Mammary epithelial cell (primary cell): ENCODE measurements at regions of chr10 and their contacts with region 1.

Region 1: GRCh38 chr10:82089333-82089732 is 214.3 kb downstream of the NRG3 start:
- DNase-seq: no peak
- H3K4me3 ChIP-seq: no peak overlapping the region
- H3K27ac ChIP-seq: no peak overlapping the region
- H3K4me1 ChIP-seq: no peaks in the 10 kb centered on the region
- H3K27me3 ChIP-seq: no peaks in the 10 kb centered on the region
- CTCF ChIP-seq: no peak

Region 2: DNA sequence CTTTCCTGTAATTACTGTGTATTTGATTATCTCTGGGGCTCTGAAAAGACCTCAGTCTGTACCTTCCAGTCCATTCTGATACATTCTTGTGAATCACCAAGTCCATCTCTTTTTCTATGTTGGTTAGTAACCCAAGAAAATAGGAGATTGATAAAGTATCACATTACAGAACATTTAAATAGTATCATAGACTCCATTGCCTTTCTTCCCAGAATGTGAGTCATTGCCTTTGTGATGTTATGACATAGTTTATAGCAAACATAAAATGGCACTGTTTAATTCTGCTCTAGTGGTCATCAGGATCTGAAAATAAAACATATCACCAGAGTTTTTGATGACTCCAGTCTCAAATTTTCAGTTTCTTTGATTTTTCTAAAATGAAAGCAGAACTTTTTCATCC is 135.9 kb before region 1 on chr10:
- CTCF ChIA-PET with region 1: no interaction called
- dilution Hi-C with region 1: no loop called
- in situ Hi-C with region 1: no loop called
- intact Hi-C with region 1: no loop called
- DNase-seq: no peak
- H3K4me3 ChIP-seq: no peak overlapping the region
- H3K27ac ChIP-seq: no peak overlapping the region
- H3K4me1 ChIP-seq: no peaks in the 10 kb centered on the region
- H3K27me3 ChIP-seq: no peaks in the 10 kb centered on the region
- CTCF ChIP-seq: no peak

Region 3: GRCh38 chr10:82037076-82037475 is 52.3 kb before region 1 on chr10:
- CTCF ChIA-PET with region 1: no interaction called
- dilution Hi-C with region 1: loop called (anchors 5 kb)
- in situ Hi-C with region 1: no loop called
- intact Hi-C with region 1: no loop called
- DNase-seq: no peak
- H3K4me3 ChIP-seq: no peak overlapping the region
- H3K27ac ChIP-seq: no peak overlapping the region
- H3K4me1 ChIP-seq: no peaks in the 10 kb centered on the region
- H3K27me3 ChIP-seq: no peaks in the 10 kb centered on the region
- CTCF ChIP-seq: no peak